ENCODE measurements at regions of chr7 and their contacts with region 1.

Region 1: DNA sequence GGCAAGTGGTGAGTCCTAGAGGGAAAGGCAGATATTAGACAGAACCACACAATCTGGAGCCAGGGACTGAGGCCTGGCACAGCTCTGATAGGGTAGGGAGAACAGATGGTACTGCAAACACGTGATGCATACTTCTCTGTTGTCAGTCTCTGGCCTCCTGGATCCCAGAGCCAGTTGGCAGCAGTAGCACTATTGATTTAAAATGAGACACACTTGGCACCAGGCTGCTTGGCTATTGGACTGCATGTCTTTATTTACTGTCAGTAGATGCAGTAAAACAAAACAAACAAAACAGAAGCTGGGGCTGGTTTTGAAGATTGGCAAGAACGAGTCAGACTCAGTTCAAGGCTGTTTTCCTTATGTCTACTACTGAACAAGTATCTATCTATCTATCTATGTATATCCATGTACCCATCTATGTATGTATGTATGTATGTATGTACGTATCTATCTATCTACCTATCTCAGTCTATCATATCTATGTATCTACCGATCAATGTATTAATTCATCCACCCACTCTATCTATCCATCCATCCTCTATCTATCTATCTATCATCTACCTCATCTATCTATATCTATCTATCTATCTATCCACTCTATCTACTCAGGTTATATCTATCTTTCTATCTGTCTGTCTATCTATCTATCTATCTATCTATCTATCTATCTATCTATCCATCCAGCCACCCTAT is 23.4 kb upstream of the MGAM2 start:
- DNase-seq: no peak
- ATAC-seq: no peak
- H3K4me3 ChIP-seq: no peak overlapping the region
- H3K27ac ChIP-seq: no peak overlapping the region
- H3K4me1 ChIP-seq: no peaks in the 10 kb centered on the region
- H3K27me3 ChIP-seq: no peaks in the 10 kb centered on the region
- CTCF ChIP-seq: no peak
- EP300 ChIP-seq: no peak
- POLR2A ChIP-seq: no peak
- RAD21 ChIP-seq: no peak

Region 2: GRCh38 chr7:142060936-142061335 is 27.2 kb before region 1 on chr7:
- CTCF ChIA-PET with region 1: no interaction called
- POLR2A ChIA-PET with region 1: no interaction called
- in situ Hi-C with region 1: no loop called
- intact Hi-C with region 1: loop called (anchors 1 kb)
- DNase-seq: no peak
- ATAC-seq: no peak
- H3K4me3 ChIP-seq: no peak overlapping the region
- H3K27ac ChIP-seq: no peak overlapping the region
- H3K4me1 ChIP-seq: peaks cover 8% of the 10 kb centered on the region
- H3K27me3 ChIP-seq: no peaks in the 10 kb centered on the region
- CTCF ChIP-seq: no peak
- EP300 ChIP-seq: no peak
- POLR2A ChIP-seq: no peak
- RAD21 ChIP-seq: no peak

Region 3: GRCh38 chr7:142298009-142298408 is 209.8 kb after region 1 on chr7:
- CTCF ChIA-PET with region 1: no interaction called
- POLR2A ChIA-PET with region 1: no interaction called
- in situ Hi-C with region 1: no loop called
- intact Hi-C with region 1: no loop called
- DNase-seq: peak; percentile 9
- ATAC-seq: peak; percentile 81
- H3K4me3 ChIP-seq: no peak overlapping the region
- H3K27ac ChIP-seq: no peak overlapping the region
- H3K4me1 ChIP-seq: no peaks in the 10 kb centered on the region
- H3K27me3 ChIP-seq: peaks cover 0 to 6% of the 10 kb centered on the region in 2 experiments; a peak in 2 of 5 replicates
- CTCF ChIP-seq: peak; percentile 34
- EP300 ChIP-seq: no peak
- POLR2A ChIP-seq: no peak
- RAD21 ChIP-seq: no peak

Measured in HepG2 (cell line).